Psoas muscle (tissue), 8 donors: ENCODE measurements at regions of chr1 and their contacts with region 1.

Region 1: GRCh38 chr1:169546087-169546995 is 39.9 kb downstream of the F5 start:
- DNase-seq: peak in 1 of 2 donors; percentile 51
- ATAC-seq: peak; percentile 73 to 95 (median 90)
- H3K4me3 ChIP-seq: no peak overlapping the region
- H3K27ac ChIP-seq: no peak overlapping the region
- H3K4me1 ChIP-seq: no peaks in the 10 kb centered on the region
- H3K27me3 ChIP-seq: no peaks in the 10 kb centered on the region
- CTCF ChIP-seq: peak; percentile 70

Region 2: DNA sequence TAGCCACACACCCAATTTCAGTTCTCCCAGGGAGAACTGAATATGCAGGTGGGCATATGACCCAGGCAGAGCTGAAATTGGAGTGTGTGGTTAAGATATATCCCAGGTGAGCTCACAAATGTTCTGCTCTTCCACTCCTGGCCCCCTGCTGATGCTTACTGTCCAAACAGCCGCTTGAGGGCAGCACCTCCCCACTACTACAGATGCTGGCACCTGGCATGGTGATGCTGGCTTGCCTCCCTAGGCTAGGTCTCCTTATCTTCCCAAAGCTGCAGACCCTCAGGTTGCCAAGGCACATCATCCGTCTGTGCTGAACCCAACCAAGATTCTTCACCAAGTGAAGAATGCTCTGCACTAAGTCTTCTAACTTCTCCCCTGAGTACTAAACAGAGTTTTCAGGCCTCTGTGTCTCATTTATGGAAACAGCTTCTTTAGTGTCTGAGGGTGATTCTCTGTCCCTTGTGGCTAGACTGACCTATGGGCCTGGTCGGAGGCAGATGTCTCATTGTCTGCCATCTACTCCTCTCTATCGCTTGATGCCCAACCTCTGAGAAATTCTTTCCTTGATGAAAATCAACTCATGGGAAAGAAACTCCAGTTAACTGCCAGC is 942.7 kb before region 1 on chr1:
- intact Hi-C with region 1: loop called in 1 of 2 experiments (anchors 5 kb)
- DNase-seq: peak; percentile 75 to 87
- ATAC-seq: peak; percentile 66 to 77 (median 72)
- H3K4me3 ChIP-seq: no peak overlapping the region
- H3K27ac ChIP-seq: peak overlapping the region; percentile 0
- H3K4me1 ChIP-seq: peaks cover 33% of the 10 kb centered on the region
- H3K27me3 ChIP-seq: no peaks in the 10 kb centered on the region
- CTCF ChIP-seq: peak; percentile 85

Region 3: GRCh38 chr1:169367486-169368405 is 178.6 kb before region 1 on chr1 and contains the starts of genes BLZF1 and NME7:
- intact Hi-C with region 1: loop called (anchors 10 kb)
- DNase-seq: peak; percentile 96 to 97
- ATAC-seq: peak; percentile 99 to 100 (median 100)
- H3K4me3 ChIP-seq: peak within 1 kb of the TSS; percentile 88
- H3K27ac ChIP-seq: peak within 1 kb of the TSS; percentile 91
- H3K4me1 ChIP-seq: peaks cover 18% of the 10 kb centered on the region
- H3K27me3 ChIP-seq: no peaks in the 10 kb centered on the region
- CTCF ChIP-seq: no peak
- total RNA-seq, gene BLZF1: 12.7 to 14.9 (median 13.7) TPM
- total RNA-seq, gene NME7: 3.9 to 6.4 (median 4.4) TPM

Region 4: DNA sequence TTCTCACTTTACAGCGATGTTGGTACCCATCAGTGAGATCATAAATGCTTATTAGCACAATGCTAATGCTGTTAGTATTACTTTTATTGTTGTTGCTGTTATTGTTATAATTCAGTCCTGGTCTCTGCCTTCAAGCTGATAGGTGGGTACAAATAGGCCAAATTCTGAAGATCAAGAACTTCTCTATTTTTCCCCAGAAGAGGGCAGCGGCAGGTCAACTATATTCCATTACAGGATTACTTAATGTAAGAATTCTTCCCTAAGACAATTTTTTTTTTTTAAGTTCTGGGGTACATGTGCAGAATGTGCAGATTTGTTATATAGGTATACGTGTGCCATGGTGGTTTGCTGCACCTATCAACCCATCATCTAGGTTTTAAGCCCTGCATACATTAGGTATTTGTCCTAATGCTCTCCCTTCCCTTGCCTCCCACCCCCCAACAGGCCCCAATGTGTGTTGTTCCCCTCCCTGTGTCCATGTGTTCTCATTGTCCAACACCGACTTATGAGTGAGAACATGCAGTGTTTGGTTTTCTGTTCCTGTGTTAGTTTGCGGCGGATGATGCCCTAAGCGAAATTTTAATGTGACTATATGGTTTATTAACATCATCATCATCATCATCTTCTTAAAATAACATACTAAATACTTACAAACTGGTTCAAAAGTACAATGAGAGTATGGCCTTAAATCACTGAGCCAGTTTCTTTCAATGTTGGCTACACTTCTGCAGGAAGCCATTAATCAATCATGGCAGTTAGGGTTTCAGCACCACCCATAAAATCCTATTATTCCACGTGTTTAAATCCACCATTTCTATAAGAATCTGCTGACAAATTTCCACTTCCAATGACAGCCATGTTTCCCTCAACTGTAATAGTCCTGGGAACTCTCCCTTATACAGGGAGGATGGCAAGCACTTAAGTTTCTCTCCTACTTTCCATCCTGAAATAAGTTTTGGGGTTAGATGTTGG is 79.8 kb before region 1 on chr1:
- intact Hi-C with region 1: loop called in 1 of 2 experiments (anchors 5 kb)
- DNase-seq: no peak
- ATAC-seq: peak in 2 of 4 donors; percentile 0 to 7
- H3K4me3 ChIP-seq: no peak overlapping the region
- H3K27ac ChIP-seq: no peak overlapping the region
- H3K4me1 ChIP-seq: no peaks in the 10 kb centered on the region
- H3K27me3 ChIP-seq: no peaks in the 10 kb centered on the region
- CTCF ChIP-seq: peak; percentile 35

Region 5: DNA sequence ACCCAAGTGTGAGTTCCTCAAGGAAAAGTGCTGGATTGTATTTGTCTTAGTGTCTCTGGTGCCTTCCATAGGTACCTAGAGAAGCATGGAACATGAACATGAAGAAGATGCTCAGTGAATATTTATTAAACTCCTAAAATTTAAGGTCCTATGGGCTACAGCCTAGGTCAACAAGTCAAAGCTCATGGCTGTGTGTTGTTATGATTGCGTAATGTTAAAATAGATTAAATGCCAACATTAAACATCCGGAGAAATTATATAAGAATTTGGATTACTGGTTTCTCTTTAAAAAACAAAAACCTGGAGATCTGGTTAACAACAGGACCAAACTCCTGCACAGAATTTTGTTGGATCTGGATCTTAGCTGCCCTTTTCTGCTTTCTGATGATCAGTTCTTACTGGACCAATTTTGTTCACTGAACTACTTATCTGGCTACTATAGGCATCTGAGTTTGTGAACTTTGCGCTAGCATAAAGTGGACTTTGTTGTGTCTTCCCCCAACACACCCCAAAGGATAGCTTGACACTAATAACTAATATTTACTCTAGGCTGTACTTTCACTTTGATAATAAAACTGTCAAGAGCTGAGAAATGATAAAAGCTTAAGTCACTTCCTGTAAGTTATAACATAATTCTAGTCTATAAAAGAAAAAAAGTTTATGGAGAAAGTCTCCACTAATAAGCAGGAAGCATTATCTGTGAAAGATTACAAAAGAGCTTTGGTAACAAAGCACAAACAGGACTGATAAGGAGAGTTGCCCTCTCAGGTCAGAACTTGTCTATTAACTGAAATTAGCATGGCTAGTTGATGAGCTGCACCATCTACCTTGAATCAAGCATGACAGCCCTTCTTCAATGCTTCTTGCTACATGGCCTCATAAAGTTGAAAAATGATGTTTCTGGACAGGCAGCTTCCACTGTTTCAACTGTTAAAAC is 19.3 kb after region 1 on chr1:
- intact Hi-C with region 1: no loop called
- DNase-seq: no peak
- ATAC-seq: no peak
- H3K4me3 ChIP-seq: no peak overlapping the region
- H3K27ac ChIP-seq: no peak overlapping the region
- H3K4me1 ChIP-seq: no peaks in the 10 kb centered on the region
- H3K27me3 ChIP-seq: no peaks in the 10 kb centered on the region
- CTCF ChIP-seq: no peak

Region 6: DNA sequence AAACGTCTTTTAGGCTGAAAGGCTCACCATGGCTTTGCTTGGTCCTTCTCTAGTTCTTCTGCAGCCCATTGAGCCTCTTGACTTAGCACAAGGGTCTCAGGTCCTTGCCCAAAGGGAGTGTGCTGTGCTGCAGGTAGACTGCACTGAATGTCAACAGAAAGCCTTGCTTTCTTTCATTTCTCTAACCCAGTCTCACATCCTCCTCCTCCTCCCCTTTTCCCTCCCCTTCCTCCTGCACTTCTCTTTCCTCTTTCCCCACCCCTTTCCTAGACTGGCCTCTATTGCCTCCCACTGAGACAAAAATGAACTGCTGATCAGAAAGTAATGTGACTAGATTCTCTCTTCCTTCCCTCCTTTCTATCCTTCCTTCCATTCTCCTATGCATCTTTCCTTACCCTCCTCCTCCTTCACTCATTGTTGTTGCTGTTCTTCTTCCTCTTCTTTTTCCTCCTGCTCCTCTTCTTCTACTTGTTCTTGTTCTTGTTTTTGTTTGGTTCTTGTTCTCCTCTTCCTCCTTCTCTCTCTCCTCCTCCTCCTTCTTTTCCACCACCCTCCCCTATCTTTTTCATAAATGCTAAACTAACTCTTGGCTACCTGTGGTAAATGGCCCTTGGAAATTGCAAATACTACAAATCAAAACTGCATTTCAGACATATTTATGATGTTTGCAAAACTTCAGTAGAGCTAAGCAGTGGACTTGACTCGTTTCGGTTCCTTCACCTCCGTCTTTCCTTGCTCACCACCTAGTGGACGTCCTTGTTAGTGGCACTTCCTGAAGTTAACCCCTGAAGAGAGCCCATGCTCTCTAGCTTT is 165.3 kb after region 1 on chr1 and contains the start of gene SELL:
- intact Hi-C with region 1: loop called in 1 of 2 experiments (anchors 10 kb)
- DNase-seq: peak in 1 of 2 donors; percentile 15
- ATAC-seq: peak; percentile 58 to 91 (median 84)
- H3K4me3 ChIP-seq: peak within 1 kb of the TSS; percentile 48
- H3K27ac ChIP-seq: no peak within 1 kb of the TSS
- H3K4me1 ChIP-seq: no peaks in the 10 kb centered on the region
- H3K27me3 ChIP-seq: peaks cover 0 to 3% (median 0%) of the 10 kb centered on the region in 3 donors
- CTCF ChIP-seq: peak; percentile 70
- total RNA-seq, gene SELL: 1.1 to 3.1 (median 1.8) TPM

Region 7: GRCh38 chr1:169809370-169810095 is 263.2 kb after region 1 on chr1:
- intact Hi-C with region 1: loop called in 1 of 2 experiments (anchors 5 kb)
- DNase-seq: no peak
- ATAC-seq: no peak
- H3K4me3 ChIP-seq: no peak overlapping the region
- H3K27ac ChIP-seq: no peak overlapping the region
- H3K4me1 ChIP-seq: no peaks in the 10 kb centered on the region
- H3K27me3 ChIP-seq: no peaks in the 10 kb centered on the region
- CTCF ChIP-seq: peak; percentile 52